Mucosa of descending colon (tissue), 3 donors: ENCODE measurements at regions of chr14 and their contacts with region 1.

Region 1: DNA sequence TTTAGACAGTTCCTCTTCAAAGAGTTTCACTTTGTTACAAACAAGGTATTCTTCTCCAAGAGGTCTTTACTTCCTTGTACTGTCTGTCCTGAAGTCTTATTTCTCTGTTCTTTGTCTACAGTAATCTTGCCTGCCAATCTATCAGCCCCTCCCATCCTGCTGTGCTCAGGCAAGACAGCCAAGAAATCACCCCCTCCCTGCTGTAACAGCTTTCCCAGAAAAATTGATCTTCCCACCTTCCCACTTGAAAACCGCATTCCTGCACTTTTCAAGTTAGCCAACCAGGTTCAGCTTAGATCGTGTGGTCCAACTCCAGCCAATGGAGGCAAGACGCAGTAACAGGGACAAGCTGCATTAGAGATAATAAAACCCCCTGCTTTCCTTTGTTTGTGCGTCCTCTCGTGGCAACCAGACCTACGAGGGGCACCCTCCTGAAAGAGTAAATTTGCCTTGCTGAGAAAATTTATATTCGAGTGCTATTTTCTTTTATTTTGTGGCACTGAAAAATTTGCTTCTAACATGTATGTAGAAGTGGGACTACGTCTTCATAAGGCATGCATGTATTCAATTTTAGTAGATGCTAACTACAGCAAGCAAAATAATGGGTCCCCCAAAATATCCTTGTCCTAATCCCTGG is 46.5 kb upstream of the ESR2 start:
- DNase-seq: no peak
- ATAC-seq: no peak
- H3K4me3 ChIP-seq: no peak overlapping the region
- H3K4me1 ChIP-seq: no peaks in the 10 kb centered on the region
- CTCF ChIP-seq: no peak

Region 2: DNA sequence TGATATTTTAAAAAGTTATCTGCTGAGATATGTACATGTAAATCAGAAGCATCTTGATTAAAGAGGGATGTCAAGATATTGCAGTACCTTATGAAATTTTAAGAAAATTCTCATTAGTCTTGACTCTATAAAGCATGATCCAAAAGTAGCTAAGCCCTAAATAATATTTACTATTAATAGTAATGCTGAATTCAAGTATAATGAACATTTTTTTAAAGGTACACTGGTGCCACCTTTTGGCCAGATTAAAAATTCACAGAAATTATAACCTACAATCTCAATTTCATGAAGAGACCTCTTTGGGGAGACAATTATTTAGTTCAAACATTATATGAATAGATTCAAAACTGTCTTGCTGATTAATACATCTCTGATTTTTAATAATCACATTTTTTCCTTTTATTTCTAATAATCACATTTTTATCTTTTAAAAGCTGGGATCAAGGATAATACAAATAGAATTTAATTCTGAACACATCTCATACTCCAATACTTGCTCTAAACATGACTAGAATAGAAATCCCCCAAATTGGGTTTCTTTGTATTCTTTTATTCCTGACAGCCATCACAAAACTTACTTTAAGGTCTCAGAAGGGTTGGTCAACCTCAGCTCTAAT is 138.1 kb after region 1 on chr14:
- intact Hi-C with region 1: loop called in 1 of 2 experiments (anchors 10 kb)
- DNase-seq: no peak
- ATAC-seq: no peak
- H3K4me3 ChIP-seq: no peak overlapping the region
- H3K4me1 ChIP-seq: no peaks in the 10 kb centered on the region
- CTCF ChIP-seq: no peak